ENCODE measurements at regions of chr9 and their contacts with region 1.

Region 1: DNA sequence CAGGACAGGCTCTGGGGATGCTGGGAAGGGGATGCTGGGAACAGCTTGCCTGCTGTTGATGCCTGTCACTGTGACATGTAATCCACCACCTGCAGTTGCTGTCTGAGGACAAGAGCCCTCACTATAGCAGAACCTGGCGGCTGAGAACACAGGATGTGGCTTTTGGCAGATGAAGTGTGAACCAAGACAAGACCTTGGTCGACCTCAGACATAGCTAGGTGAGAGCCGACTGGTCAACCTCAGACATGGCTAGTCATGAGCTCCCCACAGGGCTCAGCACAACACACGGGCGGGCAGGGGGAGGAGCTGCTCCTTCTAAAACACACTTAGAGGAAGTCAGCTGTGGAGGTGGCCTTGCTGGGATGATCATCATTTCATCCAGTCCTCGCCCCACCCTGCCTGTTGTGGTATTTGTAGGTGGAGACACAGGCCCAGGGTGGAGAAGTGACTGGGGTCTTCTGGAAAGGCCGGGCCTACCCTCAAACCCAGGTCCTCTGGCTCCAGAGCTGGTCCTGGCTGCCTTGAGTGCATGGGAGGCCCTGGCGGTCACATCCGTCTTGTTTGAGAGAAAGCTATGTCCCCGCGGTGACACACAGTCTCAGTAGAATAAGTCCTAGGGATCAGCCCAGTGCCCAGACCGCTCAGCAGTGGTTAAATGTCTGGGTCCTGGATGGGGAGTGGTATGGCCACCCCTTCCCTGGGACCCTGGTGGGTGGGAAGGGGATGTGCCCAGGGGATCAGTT is 6.1 kb downstream of the SUSD3 start:
- DNase-seq: peak; percentile 82
- ATAC-seq: peak; percentile 89
- H3K4me3 Mint-ChIP-seq: peak overlapping the region; percentile 76
- H3K27ac Mint-ChIP-seq: peak overlapping the region; percentile 95
- H3K4me1 Mint-ChIP-seq: peaks cover 61% of the 10 kb centered on the region
- H3K27me3 Mint-ChIP-seq: no peaks in the 10 kb centered on the region

Region 2: DNA sequence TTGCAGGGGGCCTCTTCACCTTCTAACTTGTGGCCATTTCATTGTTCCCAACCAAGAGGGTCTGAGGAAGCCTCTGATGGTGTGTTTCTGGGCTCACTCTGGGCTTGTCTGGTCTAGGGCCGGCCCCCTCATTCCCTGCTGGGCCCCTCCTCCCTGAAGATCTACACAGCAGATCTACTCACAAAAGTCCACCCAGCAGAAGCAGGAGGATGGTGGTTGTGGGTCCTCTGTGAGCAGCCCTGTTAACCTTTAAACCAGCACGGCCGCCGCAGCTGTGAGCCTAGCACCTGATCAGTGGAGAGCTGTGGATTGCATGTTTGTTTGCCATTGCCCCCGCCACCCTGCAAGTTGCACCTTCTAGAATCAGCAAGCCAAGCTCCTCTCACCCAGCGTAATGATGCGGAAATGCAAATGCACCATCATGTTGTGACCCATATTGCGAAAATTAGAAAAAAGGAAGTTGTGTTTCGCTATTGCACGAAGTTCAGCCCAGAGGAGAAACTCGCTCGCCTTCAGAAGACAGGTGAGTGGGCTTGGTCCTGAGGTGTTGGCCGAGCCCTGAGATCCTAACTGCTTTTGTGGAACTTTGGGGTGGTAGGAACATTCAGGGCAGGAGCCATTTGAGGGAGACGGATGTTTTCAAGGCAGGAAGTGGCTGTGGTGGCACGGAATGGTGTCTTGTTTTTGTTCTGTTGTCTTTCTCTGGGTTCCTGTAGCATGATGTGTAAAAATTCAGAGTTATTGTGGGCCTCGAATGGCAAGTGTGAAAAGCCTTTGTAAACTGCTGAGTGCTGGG is 100.5 kb before region 1 on chr9:
- POLR2A ChIA-PET with region 1: interaction called, 14 read pairs
- DNase-seq: peak; percentile 79
- ATAC-seq: peak; percentile 63
- H3K4me3 Mint-ChIP-seq: peak overlapping the region; percentile 92
- H3K27ac Mint-ChIP-seq: peak overlapping the region; percentile 99
- H3K4me1 Mint-ChIP-seq: peaks cover 47% of the 10 kb centered on the region
- H3K27me3 Mint-ChIP-seq: no peaks in the 10 kb centered on the region

Region 3: GRCh38 chr9:93028448-93029006 is 36.0 kb before region 1 on chr9:
- POLR2A ChIA-PET with region 1: interaction called, 25 read pairs
- DNase-seq: no peak
- ATAC-seq: peak; percentile 84
- H3K4me3 Mint-ChIP-seq: peak overlapping the region; percentile 74
- H3K27ac Mint-ChIP-seq: peak overlapping the region; percentile 90
- H3K4me1 Mint-ChIP-seq: peaks cover 48% of the 10 kb centered on the region
- H3K27me3 Mint-ChIP-seq: no peaks in the 10 kb centered on the region

Region 4: GRCh38 chr9:93051680-93052089 is 12.9 kb before region 1 on chr9:
- POLR2A ChIA-PET with region 1: interaction called, 13 read pairs
- DNase-seq: no peak
- ATAC-seq: no peak
- H3K4me3 Mint-ChIP-seq: no peak overlapping the region
- H3K27ac Mint-ChIP-seq: peak overlapping the region; percentile 21
- H3K4me1 Mint-ChIP-seq: peaks cover 21% of the 10 kb centered on the region
- H3K27me3 Mint-ChIP-seq: no peaks in the 10 kb centered on the region

Region 5: GRCh38 chr9:93082841-93083411 is 18.4 kb after region 1 on chr9:
- POLR2A ChIA-PET with region 1: interaction called, 22 read pairs
- DNase-seq: no peak
- ATAC-seq: peak; percentile 57
- H3K4me3 Mint-ChIP-seq: peak overlapping the region; percentile 35
- H3K27ac Mint-ChIP-seq: peak overlapping the region; percentile 97
- H3K4me1 Mint-ChIP-seq: peaks cover 24% of the 10 kb centered on the region
- H3K27me3 Mint-ChIP-seq: no peaks in the 10 kb centered on the region

Region 6: DNA sequence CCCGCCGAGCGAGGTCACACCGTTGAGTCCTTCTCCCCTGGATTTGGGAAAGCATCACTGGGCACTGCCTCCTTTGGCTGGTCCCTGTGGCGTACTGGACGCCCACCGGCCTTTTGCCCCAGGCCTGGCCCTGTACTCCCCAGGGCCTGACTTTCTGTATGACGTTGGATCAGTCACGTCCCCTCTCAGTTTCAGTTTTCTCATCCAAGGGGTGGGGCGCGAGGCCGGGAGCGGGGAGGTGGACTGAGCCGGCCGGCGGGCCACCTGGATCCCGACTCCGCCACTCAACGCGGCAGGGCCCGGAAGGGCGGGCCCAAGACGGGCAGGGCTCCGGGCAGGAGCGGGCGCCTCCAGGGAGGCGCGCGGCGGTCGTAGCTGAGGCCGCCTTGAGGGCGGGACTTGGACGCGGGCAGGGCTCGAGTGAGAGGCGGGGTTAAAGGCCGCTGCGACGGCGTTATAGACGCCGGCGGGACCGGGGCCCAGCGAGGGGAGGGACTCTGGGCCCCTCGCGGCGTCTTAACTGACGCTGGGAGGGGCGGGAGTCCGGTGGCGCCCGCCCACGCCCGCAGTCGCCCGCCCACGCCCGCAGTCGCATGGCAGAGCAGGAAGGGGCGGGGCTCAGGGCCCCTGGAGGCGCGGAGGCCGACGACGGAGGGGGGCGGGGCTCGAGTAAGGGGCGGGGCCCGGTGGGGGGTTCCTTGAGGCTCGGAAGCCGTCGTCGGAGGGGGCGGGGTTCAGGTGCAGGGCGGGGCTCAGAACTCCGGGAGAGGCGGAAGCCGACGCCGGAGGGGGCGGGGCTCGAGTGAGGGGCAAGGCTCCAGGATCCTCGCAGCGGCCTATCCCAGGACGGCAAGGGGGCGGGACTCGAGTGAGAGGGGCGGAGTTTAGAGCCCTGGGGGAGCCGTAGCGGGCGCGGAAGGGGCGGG is 30.9 kb after region 1 on chr9:
- POLR2A ChIA-PET with region 1: interaction called, 58 read pairs
- DNase-seq: peak; percentile 100
- ATAC-seq: peak; percentile 79
- H3K4me3 Mint-ChIP-seq: peak overlapping the region; percentile 86
- H3K27ac Mint-ChIP-seq: peak overlapping the region; percentile 99
- H3K4me1 Mint-ChIP-seq: peaks cover 63% of the 10 kb centered on the region
- H3K27me3 Mint-ChIP-seq: no peaks in the 10 kb centered on the region